WTC11 (cell line): ENCODE measurements at regions of chr11 and their contacts with region 1.

Region 1: DNA sequence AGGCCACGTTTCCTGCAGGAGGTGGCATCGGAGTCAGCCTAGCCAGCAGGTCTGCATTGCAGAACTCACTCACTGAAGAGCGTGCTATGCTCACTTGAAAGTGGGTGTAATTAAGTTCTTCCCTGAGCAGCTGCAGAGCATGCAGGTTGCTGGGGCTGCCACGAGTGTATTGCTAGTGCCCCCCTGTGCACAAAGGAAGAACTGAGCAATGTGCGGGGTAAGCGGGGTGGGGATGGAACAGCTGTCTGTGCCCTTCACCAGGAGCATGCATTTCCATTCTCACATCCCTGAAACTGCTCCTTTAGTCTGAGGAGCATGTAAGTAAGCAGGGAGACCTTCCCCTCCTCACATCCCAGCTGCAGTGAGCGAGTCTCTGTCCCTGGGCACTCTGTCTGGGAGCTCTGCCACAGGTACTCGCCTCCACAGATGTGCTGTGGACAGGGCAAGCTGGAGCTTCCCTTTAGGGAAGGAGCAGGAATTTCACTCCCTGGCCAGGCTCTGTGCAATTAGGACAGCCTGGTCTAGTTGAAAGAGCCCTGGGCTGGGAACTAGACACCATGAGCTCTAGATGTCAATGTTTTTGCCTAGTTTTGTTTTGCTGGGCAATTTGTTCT is 1031.8 kb downstream of the NTM start:
- DNase-seq: peak; percentile 71
- ATAC-seq: peak; percentile 89
- H3K4me3 Mint-ChIP-seq: no peak overlapping the region
- H3K27ac Mint-ChIP-seq: no peak overlapping the region
- H3K4me1 Mint-ChIP-seq: peaks cover 33% of the 10 kb centered on the region
- H3K27me3 Mint-ChIP-seq: peaks cover 4% of the 10 kb centered on the region; the same call in 1 of the 2 replicates
- CTCF ChIP-seq: peak; percentile 41; the same call in 1 of the 2 replicates

Region 2: DNA sequence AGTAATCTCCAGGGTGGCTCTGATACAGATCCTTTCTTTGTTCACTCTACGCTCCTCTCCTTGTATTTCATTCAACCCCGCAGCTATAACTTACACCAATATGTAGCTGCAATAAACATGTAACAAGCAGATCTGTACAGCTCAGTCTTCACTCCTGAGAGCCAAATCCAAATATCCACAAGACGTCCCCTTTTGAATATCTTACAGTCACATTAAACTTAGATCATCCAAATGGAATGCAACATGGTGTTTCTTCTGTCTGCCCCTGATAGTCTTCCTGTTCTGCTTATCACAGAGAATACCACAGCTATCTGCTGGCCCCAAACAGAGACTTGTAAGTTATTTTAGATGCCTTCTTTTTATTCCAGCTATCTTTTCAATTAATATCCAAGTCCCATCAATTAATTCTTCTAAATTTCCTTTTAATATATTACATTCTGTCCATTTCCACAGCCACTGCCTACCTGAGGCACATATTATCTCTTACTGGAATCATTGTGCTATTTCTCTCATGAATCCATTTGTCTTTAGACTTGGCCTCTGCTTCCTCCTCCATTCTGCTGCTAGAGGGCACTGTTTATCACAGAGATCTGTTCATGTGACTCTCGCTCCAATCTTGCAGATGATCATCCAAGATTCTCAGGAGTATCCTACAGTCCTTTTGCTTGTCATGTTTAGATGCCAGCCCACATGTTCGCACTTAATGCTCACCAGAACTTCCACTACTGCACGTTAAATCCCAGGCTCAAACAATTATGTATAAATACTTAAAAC is 123.2 kb before region 1 on chr11:
- CTCF ChIA-PET with region 1: interaction called, 10 read pairs
- POLR2A ChIA-PET with region 1: interaction called, 4 read pairs
- DNase-seq: no peak
- ATAC-seq: peak; percentile 81
- H3K4me3 Mint-ChIP-seq: no peak overlapping the region
- H3K27ac Mint-ChIP-seq: no peak overlapping the region; the same call in 1 of the 2 replicates
- H3K4me1 Mint-ChIP-seq: peaks cover 8% of the 10 kb centered on the region
- H3K27me3 Mint-ChIP-seq: no peaks in the 10 kb centered on the region
- CTCF ChIP-seq: peak; percentile 31; the same call in 1 of the 2 replicates

Region 3: GRCh38 chr11:132357811-132358572 is 44.2 kb before region 1 on chr11:
- CTCF ChIA-PET with region 1: no interaction called
- POLR2A ChIA-PET with region 1: no interaction called
- DNase-seq: no peak
- ATAC-seq: no peak
- H3K4me3 Mint-ChIP-seq: no peak overlapping the region
- H3K27ac Mint-ChIP-seq: no peak overlapping the region
- H3K4me1 Mint-ChIP-seq: 0 out of 2 replicates have a peak, but pooled peaks cover 3% of the 10 kb centered on the region
- H3K27me3 Mint-ChIP-seq: no peaks in the 10 kb centered on the region
- CTCF ChIP-seq: no peak